ENCODE measurements at regions of chr22 and their contacts with region 1.

Region 1: GRCh38 chr22:45298934-45299505 is 10.7 kb upstream of the FAM118A start:
- DNase-seq: no peak
- H3K4me3 ChIP-seq: no peak overlapping the region
- H3K27ac ChIP-seq: no peak overlapping the region
- H3K4me1 ChIP-seq: no peaks in the 10 kb centered on the region
- H3K27me3 ChIP-seq: no peaks in the 10 kb centered on the region
- CTCF ChIP-seq: no peak
- POLR2A ChIP-seq: no peak

Region 2: GRCh38 chr22:45318168-45318557 is 19.1 kb after region 1 on chr22:
- intact Hi-C with region 1: loop called (anchors 1 kb)
- DNase-seq: peak; percentile 69 to 71
- H3K4me3 ChIP-seq: peak overlapping the region in 2 of 3 donors; percentile 0 to 39
- H3K27ac ChIP-seq: peak overlapping the region; percentile 76 to 92
- H3K4me1 ChIP-seq: peaks cover 0 to 7% of the 10 kb centered on the region in 2 donors
- H3K27me3 ChIP-seq: no peaks in the 10 kb centered on the region
- CTCF ChIP-seq: no peak
- POLR2A ChIP-seq: no peak